ENCODE measurements at regions of chr11 and their contacts with region 1.

Region 1: GRCh38 chr11:116281173-116282160 is 491.3 kb downstream of the BUD13 start:
- DNase-seq: no peak
- H3K4me3 ChIP-seq: no peak overlapping the region
- H3K4me3 Mint-ChIP-seq: no peak overlapping the region
- H3K27ac Mint-ChIP-seq: no peak overlapping the region
- H3K4me1 ChIP-seq: peaks cover 27% of the 10 kb centered on the region
- H3K4me1 Mint-ChIP-seq: peaks cover 7% of the 10 kb centered on the region
- H3K27me3 ChIP-seq: no peaks in the 10 kb centered on the region
- H3K27me3 Mint-ChIP-seq: no peaks in the 10 kb centered on the region
- CTCF ChIP-seq: peak; percentile 61 to 69

Region 2: GRCh38 chr11:116217006-116217405 is 64.5 kb before region 1 on chr11:
- CTCF ChIA-PET with region 1: interaction called, 11 read pairs
- POLR2A ChIA-PET with region 1: no interaction called
- intact Hi-C with region 1: loop called (anchors 1 kb)
- DNase-seq: peak; percentile 62 to 73
- H3K4me3 ChIP-seq: no peak overlapping the region
- H3K4me3 Mint-ChIP-seq: no peak overlapping the region
- H3K27ac Mint-ChIP-seq: no peak overlapping the region
- H3K4me1 ChIP-seq: no peaks in the 10 kb centered on the region
- H3K4me1 Mint-ChIP-seq: peaks cover under 1% of the 10 kb centered on the region
- H3K27me3 ChIP-seq: no peaks in the 10 kb centered on the region; the same call in 1 of the 2 replicates
- H3K27me3 Mint-ChIP-seq: no peaks in the 10 kb centered on the region
- CTCF ChIP-seq: peak; percentile 93 to 96

Region 3: GRCh38 chr11:116263770-116264169 is 17.7 kb before region 1 on chr11:
- CTCF ChIA-PET with region 1: no interaction called
- POLR2A ChIA-PET with region 1: no interaction called
- intact Hi-C with region 1: no loop called
- DNase-seq: no peak
- H3K4me3 ChIP-seq: no peak overlapping the region
- H3K4me3 Mint-ChIP-seq: no peak overlapping the region
- H3K27ac Mint-ChIP-seq: no peak overlapping the region
- H3K4me1 ChIP-seq: no peaks in the 10 kb centered on the region
- H3K4me1 Mint-ChIP-seq: no peaks in the 10 kb centered on the region
- H3K27me3 ChIP-seq: no peaks in the 10 kb centered on the region
- H3K27me3 Mint-ChIP-seq: peaks cover 41% of the 10 kb centered on the region
- CTCF ChIP-seq: no peak

Region 4: DNA sequence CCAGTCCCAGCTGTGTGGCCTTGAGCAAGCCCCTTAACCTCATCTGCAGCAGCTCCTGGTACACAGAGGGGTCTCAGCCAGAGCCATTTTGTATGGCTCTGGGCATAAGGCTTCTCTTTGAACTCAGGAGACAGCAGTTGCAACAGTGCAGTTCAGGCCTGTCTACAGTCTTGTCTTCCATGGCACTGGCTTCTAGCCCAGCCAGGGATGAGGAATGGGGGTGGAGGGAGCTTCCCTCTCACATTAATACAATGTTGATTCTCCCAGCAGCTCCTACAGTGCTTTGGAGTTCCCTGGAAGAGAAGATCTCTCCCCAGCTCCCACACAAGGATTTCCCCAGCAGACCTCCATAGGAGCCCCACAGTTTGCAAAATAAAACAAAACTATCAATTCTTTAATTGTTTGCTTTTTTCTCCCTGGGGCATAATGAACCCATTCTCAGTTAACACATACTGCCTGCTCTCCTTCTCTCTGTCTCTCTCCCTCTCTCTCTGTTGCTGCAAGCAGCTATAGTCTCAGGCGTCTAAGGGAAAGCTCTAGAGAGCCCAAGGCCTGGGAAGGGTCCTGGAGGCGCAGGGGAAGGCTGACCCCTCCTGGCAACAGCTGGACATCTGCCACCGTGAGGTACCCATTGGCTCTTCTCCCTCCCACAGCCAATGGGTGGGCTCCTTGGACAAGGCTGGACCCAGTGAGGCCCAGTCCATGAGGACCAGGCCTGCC is 141.2 kb after region 1 on chr11:
- CTCF ChIA-PET with region 1: interaction called, 9 read pairs
- POLR2A ChIA-PET with region 1: no interaction called
- intact Hi-C with region 1: loop called (anchors 1 kb)
- DNase-seq: peak; percentile 56 to 63
- H3K4me3 ChIP-seq: no peak overlapping the region
- H3K4me3 Mint-ChIP-seq: no peak overlapping the region
- H3K27ac Mint-ChIP-seq: no peak overlapping the region
- H3K4me1 ChIP-seq: peaks cover 15% of the 10 kb centered on the region
- H3K4me1 Mint-ChIP-seq: peaks cover 14% of the 10 kb centered on the region
- H3K27me3 ChIP-seq: no peaks in the 10 kb centered on the region
- H3K27me3 Mint-ChIP-seq: no peaks in the 10 kb centered on the region
- CTCF ChIP-seq: peak; percentile 18 to 48

Region 5: DNA sequence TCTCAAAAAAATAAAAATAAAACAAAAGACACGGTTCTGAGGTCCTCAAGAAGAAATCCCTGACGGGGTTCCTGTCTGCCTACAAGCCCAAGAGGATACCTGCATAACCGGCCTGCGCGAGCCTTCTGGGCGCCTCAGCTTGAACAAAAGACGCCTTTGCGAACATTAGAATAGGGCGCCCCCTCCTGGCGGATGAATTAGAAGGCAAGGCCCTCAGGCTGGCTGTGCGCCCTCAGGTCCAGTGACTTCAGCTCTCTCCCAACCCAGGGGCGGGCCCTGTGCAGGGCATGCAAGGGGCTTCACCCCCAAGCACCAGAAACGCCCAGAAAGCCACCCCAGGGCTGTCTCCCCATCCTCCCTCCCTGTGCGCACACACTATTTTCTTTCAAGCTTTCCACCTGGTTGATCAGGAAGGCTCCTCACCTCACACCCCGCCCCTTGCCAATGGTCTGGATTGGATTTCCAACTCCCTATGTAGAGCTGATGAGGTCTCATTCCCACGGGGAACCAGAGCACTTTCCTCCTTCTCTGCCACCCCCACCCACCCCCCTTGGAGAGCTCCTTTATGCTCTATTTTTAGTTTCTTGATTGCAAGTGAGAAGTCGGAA is 218.0 kb after region 1 on chr11:
- CTCF ChIA-PET with region 1: interaction called, 10 read pairs
- POLR2A ChIA-PET with region 1: no interaction called
- intact Hi-C with region 1: loop called (anchors 1 kb)
- DNase-seq: peak; percentile 89 to 92
- H3K4me3 ChIP-seq: no peak overlapping the region
- H3K4me3 Mint-ChIP-seq: no peak overlapping the region
- H3K27ac Mint-ChIP-seq: no peak overlapping the region
- H3K4me1 ChIP-seq: peaks cover 7% of the 10 kb centered on the region; the same call in 1 of the 2 replicates
- H3K4me1 Mint-ChIP-seq: no peaks in the 10 kb centered on the region
- H3K27me3 ChIP-seq: no peaks in the 10 kb centered on the region
- H3K27me3 Mint-ChIP-seq: peaks cover 3% of the 10 kb centered on the region
- CTCF ChIP-seq: peak; percentile 86 to 93